ENCODE measurements at regions of chr3 and their contacts with region 1.

Region 1: DNA sequence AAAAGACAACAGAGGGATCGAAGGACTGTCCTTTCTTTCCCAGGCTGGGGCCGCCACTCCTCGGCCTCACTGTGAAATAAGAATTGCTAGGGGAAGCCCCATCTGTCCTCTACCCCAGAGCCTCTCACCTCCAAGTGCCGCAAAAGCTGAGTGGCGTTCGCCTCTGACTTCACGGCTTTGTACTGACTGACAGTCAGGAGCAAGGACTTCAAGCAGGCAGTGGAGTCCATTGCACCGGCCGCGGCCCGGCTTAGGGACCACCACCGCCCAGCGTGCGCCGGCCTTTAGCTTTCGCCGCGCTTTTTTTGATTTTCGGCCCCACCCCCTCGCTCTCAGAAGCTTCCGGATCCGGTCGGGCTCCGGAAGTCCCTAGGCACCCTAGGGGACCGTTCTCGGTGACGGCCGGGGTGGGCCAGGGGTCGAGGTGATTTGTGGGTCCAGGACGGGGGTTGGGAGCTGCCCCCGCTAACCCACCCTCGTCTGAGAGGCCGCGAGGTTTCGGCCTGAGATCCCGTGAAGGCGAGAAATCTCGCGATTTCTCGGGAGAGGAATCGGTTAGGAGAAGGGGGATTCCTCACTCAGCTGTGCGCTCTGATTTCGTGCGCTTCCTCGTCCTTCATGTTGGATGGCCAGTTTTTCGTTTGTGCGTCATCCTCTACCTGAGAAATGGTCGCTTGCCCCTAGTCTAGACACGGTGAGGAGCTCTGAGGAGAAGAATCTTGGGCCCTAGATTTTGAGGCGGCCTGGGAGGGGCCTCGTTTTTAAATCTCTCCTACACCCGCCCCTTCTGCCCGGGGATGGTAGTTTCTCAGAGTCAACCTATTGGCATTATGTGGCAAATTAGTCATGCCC is at the starts of genes CIP2A and DZIP3:
- DNase-seq: peak; percentile 81
- H3K4me3 Mint-ChIP-seq: peak within 1 kb of the TSS; percentile 99
- H3K27ac Mint-ChIP-seq: peak within 1 kb of the TSS; percentile 99
- H3K4me1 Mint-ChIP-seq: peaks cover 46% of the 10 kb centered on the region
- H3K27me3 Mint-ChIP-seq: no peaks in the 10 kb centered on the region
- total RNA-seq, gene CIP2A: 45.6 and 53.2 TPM in 2 replicates
- total RNA-seq, gene DZIP3: 4.9 and 6.4 TPM in 2 replicates

Region 2: GRCh38 chr3:108124337-108125152 is 464.8 kb before region 1 on chr3:
- intact Hi-C with region 1: loop called (anchors 5 kb)
- DNase-seq: peak; percentile 68
- H3K4me3 Mint-ChIP-seq: peak overlapping the region; percentile 96
- H3K27ac Mint-ChIP-seq: peak overlapping the region; percentile 99
- H3K4me1 Mint-ChIP-seq: peaks cover 66% of the 10 kb centered on the region
- H3K27me3 Mint-ChIP-seq: no peaks in the 10 kb centered on the region

Region 3: GRCh38 chr3:108292905-108293328 is 296.5 kb before region 1 on chr3:
- intact Hi-C with region 1: loop called (anchors 10 kb)
- DNase-seq: no peak
- H3K4me3 Mint-ChIP-seq: no peak overlapping the region
- H3K27ac Mint-ChIP-seq: peak overlapping the region; percentile 80
- H3K4me1 Mint-ChIP-seq: peaks cover 60% of the 10 kb centered on the region
- H3K27me3 Mint-ChIP-seq: no peaks in the 10 kb centered on the region

Region 4: GRCh38 chr3:108599677-108600409 is 10.5 kb after region 1 on chr3:
- intact Hi-C with region 1: loop called (anchors 1 kb)
- DNase-seq: no peak
- H3K4me3 Mint-ChIP-seq: no peak overlapping the region
- H3K27ac Mint-ChIP-seq: no peak overlapping the region
- H3K4me1 Mint-ChIP-seq: peaks cover 64% of the 10 kb centered on the region
- H3K27me3 Mint-ChIP-seq: no peaks in the 10 kb centered on the region

Region 5: DNA sequence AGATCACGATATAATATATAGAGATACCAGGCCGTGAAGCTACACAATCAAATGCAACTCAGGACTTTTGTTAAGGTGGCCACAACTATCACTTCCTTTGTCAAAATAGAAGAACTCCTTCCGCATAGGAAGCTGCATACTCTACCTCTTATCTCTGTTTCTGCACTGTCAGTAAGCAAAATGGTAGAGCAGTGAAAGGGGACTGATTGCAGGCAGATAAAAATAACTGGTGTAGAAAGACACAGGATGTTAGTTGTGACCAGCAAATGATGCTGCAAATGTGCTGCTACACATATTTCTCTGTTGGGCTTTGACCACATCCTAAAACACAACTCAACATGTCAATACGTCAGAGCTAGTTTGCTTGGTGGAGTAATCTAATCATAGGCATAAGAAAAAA is 216.9 kb after region 1 on chr3:
- intact Hi-C with region 1: loop called (anchors 1 kb)
- DNase-seq: peak; percentile 58
- H3K4me3 Mint-ChIP-seq: no peak overlapping the region
- H3K27ac Mint-ChIP-seq: peak overlapping the region; percentile 68
- H3K4me1 Mint-ChIP-seq: peaks cover 22% of the 10 kb centered on the region
- H3K27me3 Mint-ChIP-seq: no peaks in the 10 kb centered on the region

Region 6: DNA sequence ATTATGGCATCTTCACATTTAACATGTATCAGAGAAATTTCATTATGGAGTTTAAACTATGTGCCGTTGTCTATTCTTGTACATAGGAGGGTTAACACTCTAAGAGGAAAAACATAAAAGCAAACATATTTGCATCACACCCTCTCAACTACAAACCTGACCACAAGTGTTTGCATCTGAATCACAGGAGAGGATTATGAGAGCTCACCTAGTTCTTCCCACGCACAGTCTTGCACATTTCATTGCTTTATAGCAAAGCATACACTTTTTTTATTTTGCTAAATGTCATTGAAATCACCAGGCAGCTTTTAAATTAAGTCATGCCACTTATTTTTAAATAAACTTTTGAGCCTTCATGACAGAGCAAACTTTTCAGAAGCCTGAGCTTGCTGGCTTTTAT is 245.7 kb after region 1 on chr3:
- intact Hi-C with region 1: loop called (anchors 2 kb)
- DNase-seq: no peak
- H3K4me3 Mint-ChIP-seq: peak overlapping the region; percentile 81
- H3K27ac Mint-ChIP-seq: peak overlapping the region; percentile 98
- H3K4me1 Mint-ChIP-seq: peaks cover 80% of the 10 kb centered on the region
- H3K27me3 Mint-ChIP-seq: no peaks in the 10 kb centered on the region

Region 7: DNA sequence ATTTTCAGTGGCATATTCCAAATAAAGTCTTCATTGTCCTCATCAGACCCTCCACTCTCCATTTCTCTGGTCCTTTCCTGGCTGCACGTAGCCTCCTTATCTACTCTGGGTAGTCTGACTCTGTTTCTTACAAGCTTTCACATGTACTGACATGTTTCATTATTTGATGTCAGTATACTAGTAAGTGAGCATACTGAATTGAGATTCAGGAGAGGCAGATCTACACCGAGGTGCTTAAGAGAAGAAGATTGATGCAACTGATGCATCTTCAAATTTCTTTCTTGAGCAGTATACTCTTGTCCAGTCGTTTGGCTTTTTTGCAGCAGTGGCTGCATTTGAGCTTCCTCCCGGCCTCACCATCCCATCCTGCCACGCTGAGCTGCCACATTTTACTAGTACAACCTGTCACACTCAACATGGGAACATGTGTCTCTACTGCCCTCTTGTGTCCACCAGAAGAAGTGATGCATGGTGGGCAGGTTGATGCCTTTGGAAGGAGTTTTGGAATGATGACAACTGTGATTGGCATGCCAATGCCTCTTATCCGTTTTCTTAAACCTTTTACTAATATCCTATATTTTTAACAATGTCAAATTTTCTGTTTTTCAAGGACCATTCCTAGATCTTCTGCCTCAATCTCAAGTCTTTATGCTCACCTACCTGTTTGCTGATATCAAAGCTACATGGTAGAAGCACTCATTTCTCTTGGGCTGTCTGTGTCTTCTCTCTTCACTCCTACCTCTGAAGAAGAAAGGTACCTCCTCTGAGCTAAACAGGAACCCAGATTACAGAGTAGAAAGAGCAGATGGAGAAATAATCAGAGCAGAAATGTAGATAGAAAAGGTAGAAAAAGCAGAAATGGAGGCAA is 325.6 kb after region 1 on chr3:
- intact Hi-C with region 1: loop called (anchors 10 kb)
- DNase-seq: peak; percentile 57
- H3K4me3 Mint-ChIP-seq: peak overlapping the region; percentile 5
- H3K27ac Mint-ChIP-seq: no peak overlapping the region
- H3K4me1 Mint-ChIP-seq: peaks cover 16% of the 10 kb centered on the region
- H3K27me3 Mint-ChIP-seq: peaks cover 19% of the 10 kb centered on the region